Breast epithelium (tissue), 4 donors: ENCODE measurements at regions of chr20 and their contacts with region 1.

Region 1: GRCh38 chr20:52379723-52380336 is 188.3 kb upstream of the ZFP64 start:
- DNase-seq: no peak
- H3K4me3 ChIP-seq: no peak overlapping the region
- H3K27ac ChIP-seq: no peak overlapping the region
- H3K4me1 ChIP-seq: no peaks in the 10 kb centered on the region
- H3K27me3 ChIP-seq: no peaks in the 10 kb centered on the region
- CTCF ChIP-seq: peak; percentile 49 to 52 (median 51)
- POLR2A ChIP-seq: no peak

Region 2: GRCh38 chr20:52577696-52578095 is 197.9 kb after region 1 on chr20:
- intact Hi-C with region 1: no loop called
- DNase-seq: no peak
- H3K4me3 ChIP-seq: no peak overlapping the region
- H3K27ac ChIP-seq: no peak overlapping the region
- H3K4me1 ChIP-seq: no peaks in the 10 kb centered on the region
- H3K27me3 ChIP-seq: no peaks in the 10 kb centered on the region
- CTCF ChIP-seq: no peak
- POLR2A ChIP-seq: no peak

Region 3: DNA sequence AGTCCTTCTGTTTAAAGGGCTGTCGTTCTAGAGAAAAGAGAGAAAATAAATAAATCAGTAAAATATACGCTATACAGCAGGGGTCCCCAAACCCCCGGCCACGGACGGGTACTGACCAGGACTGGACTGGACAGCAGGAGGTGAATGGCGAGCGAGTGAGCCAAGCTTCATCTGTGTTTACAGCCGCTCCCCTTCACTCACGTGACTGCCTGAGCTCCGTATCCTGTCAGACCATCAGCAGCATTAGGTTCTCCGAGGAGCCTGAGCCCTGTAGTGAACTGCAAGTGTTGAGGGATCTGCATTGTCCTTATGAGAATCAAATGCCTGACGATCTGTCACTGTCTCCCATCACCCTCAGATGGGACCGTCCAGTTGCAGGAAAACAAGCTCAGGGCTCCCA is 1137.3 kb after region 1 on chr20:
- intact Hi-C with region 1: loop called (anchors 5 kb)
- DNase-seq: no peak
- H3K4me3 ChIP-seq: no peak overlapping the region
- H3K27ac ChIP-seq: no peak overlapping the region
- H3K4me1 ChIP-seq: no peaks in the 10 kb centered on the region
- H3K27me3 ChIP-seq: no peaks in the 10 kb centered on the region
- CTCF ChIP-seq: no peak
- POLR2A ChIP-seq: no peak